Left ventricle myocardium inferior (tissue), 1 donor: ENCODE measurements at regions of chr7 and their contacts with region 1.

Region 1: DNA sequence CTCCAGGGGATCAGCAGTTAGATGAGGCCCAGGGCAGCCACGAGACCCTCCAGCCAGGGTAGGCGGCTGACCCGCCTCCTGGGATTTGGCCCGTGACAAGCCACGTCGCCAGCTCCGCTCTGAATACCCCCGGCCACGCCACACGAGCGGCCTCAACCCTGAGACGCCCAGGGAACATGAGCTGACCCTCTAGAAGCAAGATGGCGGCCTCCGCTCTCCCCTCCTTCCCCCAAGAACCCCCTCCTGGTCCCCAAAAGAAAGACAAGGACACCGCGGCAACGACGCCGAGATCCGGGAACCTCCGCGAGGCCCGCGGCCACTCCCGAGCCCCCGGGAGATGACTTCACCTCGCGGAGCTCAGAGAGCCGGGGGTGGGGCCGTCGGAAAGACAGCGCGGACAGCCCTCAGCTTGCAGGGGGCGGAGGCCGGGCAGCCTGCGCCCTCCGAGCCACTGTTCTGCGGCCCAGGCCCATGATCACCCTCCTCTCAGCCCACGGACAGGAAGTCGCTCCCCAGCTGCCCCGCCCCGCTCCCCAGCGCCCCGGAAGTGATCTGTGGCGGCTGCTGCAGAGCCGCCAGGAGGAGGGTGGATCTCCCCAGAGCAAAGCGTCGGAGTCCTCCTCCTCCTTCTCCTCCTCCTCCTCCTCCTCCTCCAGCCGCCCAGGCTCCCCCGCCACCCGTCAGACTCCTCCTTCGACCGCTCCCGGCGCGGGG is at the start of gene RALA:
- DNase-seq: peak; percentile 93
- H3K4me3 ChIP-seq: peak within 1 kb of the TSS; percentile 93
- H3K27ac ChIP-seq: peak within 1 kb of the TSS; percentile 93
- H3K4me1 ChIP-seq: peaks cover 64% of the 10 kb centered on the region
- H3K27me3 ChIP-seq: no peaks in the 10 kb centered on the region
- CTCF ChIP-seq: no peak
- total RNA-seq, gene RALA: 29.1 TPM

Region 2: GRCh38 chr7:39480901-39481300 is 142.3 kb before region 1 on chr7:
- intact Hi-C with region 1: no loop called
- DNase-seq: no peak
- H3K4me3 ChIP-seq: no peak overlapping the region
- H3K27ac ChIP-seq: no peak overlapping the region
- H3K4me1 ChIP-seq: no peaks in the 10 kb centered on the region
- H3K27me3 ChIP-seq: peaks cover 12% of the 10 kb centered on the region
- CTCF ChIP-seq: no peak

Region 3: GRCh38 chr7:39720574-39720973 is 97.4 kb after region 1 on chr7:
- intact Hi-C with region 1: no loop called
- DNase-seq: no peak
- H3K4me3 ChIP-seq: no peak overlapping the region
- H3K27ac ChIP-seq: no peak overlapping the region
- H3K4me1 ChIP-seq: no peaks in the 10 kb centered on the region
- H3K27me3 ChIP-seq: no peaks in the 10 kb centered on the region
- CTCF ChIP-seq: no peak

Region 4: GRCh38 chr7:39732837-39733804 is 109.9 kb after region 1 on chr7:
- intact Hi-C with region 1: loop called (anchors 10 kb)
- DNase-seq: peak; percentile 96
- H3K4me3 ChIP-seq: peak overlapping the region; percentile 71
- H3K27ac ChIP-seq: peak overlapping the region; percentile 80
- H3K4me1 ChIP-seq: peaks cover 29% of the 10 kb centered on the region
- H3K27me3 ChIP-seq: no peaks in the 10 kb centered on the region
- CTCF ChIP-seq: no peak

Region 5: GRCh38 chr7:40516376-40516775 is 893.2 kb after region 1 on chr7:
- intact Hi-C with region 1: no loop called
- DNase-seq: no peak
- H3K4me3 ChIP-seq: no peak overlapping the region
- H3K27ac ChIP-seq: no peak overlapping the region
- H3K4me1 ChIP-seq: no peaks in the 10 kb centered on the region
- H3K27me3 ChIP-seq: no peaks in the 10 kb centered on the region
- CTCF ChIP-seq: no peak